WTC11 (cell line): ENCODE measurements at regions of chr2 and their contacts with region 1.

Region 1: DNA sequence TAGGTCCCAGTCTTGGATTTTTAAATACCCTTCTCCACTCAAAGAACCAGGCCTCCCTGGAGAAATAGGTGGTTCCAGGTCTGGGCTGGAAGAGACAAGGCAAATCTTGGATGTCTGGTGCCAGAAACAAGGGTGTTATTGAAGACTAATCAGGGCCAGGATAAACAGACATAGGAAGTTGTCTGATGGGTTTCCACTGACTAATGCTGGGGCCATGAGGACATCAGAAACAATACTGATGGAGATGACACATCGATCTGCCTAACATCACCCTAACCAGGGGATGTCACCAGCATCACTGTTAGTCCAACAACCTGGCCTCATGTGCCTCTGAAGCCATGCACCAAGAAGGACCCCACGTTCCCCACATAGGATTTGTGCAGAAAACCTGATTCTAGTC is 42.5 kb upstream of the GLI2 start:
- DNase-seq: no peak
- ATAC-seq: no peak
- H3K4me3 Mint-ChIP-seq: no peak overlapping the region
- H3K27ac Mint-ChIP-seq: no peak overlapping the region
- H3K4me1 Mint-ChIP-seq: peaks cover 20% of the 10 kb centered on the region
- H3K27me3 Mint-ChIP-seq: peaks cover 61% of the 10 kb centered on the region
- CTCF ChIP-seq: no peak

Region 2: GRCh38 chr2:120661551-120661950 is 31.6 kb before region 1 on chr2:
- CTCF ChIA-PET with region 1: no interaction called
- POLR2A ChIA-PET with region 1: no interaction called
- DNase-seq: peak; percentile 82
- ATAC-seq: peak; percentile 97
- H3K4me3 Mint-ChIP-seq: peak overlapping the region; percentile 32; the same call in 1 of the 2 replicates
- H3K27ac Mint-ChIP-seq: no peak overlapping the region
- H3K4me1 Mint-ChIP-seq: peaks cover 10% of the 10 kb centered on the region
- H3K27me3 Mint-ChIP-seq: peaks cover 74% of the 10 kb centered on the region
- CTCF ChIP-seq: no peak

Region 3: GRCh38 chr2:120740765-120741524 is 47.8 kb after region 1 on chr2:
- CTCF ChIA-PET with region 1: interaction called, 36 read pairs
- POLR2A ChIA-PET with region 1: no interaction called
- DNase-seq: peak; percentile 71
- ATAC-seq: peak; percentile 50
- H3K4me3 Mint-ChIP-seq: peak overlapping the region; percentile 65
- H3K27ac Mint-ChIP-seq: peak overlapping the region; percentile 97
- H3K4me1 Mint-ChIP-seq: peaks cover 68% of the 10 kb centered on the region
- H3K27me3 Mint-ChIP-seq: no peaks in the 10 kb centered on the region
- CTCF ChIP-seq: no peak

Region 4: GRCh38 chr2:120825370-120826259 is 132.5 kb after region 1 on chr2:
- CTCF ChIA-PET with region 1: interaction called, 10 read pairs
- POLR2A ChIA-PET with region 1: no interaction called
- DNase-seq: no peak
- ATAC-seq: peak; percentile 34
- H3K4me3 Mint-ChIP-seq: no peak overlapping the region; the same call in 1 of the 2 replicates
- H3K27ac Mint-ChIP-seq: peak overlapping the region; percentile 94
- H3K4me1 Mint-ChIP-seq: peaks cover 66% of the 10 kb centered on the region
- H3K27me3 Mint-ChIP-seq: no peaks in the 10 kb centered on the region
- CTCF ChIP-seq: no peak

Region 5: DNA sequence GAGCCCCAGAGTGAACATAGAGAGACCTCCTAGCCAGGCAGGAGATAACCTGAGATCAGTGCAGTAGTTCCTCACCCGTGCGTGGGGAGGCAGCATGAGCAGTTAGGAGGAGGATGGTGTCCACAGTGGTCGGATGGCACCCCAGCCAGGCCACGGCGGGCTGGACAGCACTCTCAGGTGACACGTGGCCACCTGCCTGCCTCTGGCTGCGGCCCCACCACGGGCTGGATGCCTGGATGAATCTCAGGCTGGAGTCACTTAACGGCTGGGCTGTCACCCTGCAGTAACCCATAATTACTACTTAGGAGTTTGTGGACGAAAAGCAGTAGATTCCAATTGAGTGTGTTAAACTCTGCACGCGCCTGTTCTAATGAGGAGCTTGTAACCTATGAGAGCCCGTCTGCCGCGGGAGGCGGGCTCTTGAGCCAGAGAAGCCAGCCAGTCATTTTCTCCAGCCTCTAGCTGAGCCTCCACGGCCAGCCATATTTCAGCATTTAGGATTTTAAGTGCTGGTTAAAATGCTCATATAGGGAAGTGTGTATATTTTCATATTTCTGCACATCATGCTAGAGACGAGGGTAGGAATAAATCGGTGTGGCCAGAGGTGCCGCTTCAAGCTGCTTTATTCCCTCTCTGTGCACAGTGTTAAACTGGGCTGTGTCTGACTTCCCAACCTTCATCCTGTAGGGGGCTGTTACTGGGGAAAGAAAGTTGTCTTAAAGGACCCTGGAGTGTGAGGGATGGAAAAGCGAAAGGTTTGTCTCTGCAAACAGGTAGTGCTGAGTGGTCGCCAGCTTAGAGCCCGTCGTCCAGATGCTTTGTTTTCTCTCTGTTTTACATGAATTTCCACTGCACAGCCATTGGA is 186.5 kb after region 1 on chr2:
- CTCF ChIA-PET with region 1: interaction called, 24 read pairs
- POLR2A ChIA-PET with region 1: no interaction called
- DNase-seq: no peak
- ATAC-seq: peak; percentile 54
- H3K4me3 Mint-ChIP-seq: no peak overlapping the region
- H3K27ac Mint-ChIP-seq: 0 out of 2 replicates have a peak overlapping the region, but pooled peaks have one; percentile 32
- H3K4me1 Mint-ChIP-seq: peaks cover 65% of the 10 kb centered on the region
- H3K27me3 Mint-ChIP-seq: 0 out of 2 replicates have a peak, but pooled peaks cover 2% of the 10 kb centered on the region
- CTCF ChIP-seq: no peak

Region 6: GRCh38 chr2:120958623-120959366 is 265.7 kb after region 1 on chr2:
- CTCF ChIA-PET with region 1: interaction called, 42 read pairs
- POLR2A ChIA-PET with region 1: no interaction called
- DNase-seq: peak; percentile 88
- ATAC-seq: peak; percentile 86
- H3K4me3 Mint-ChIP-seq: no peak overlapping the region
- H3K27ac Mint-ChIP-seq: peak overlapping the region; percentile 39; the same call in 1 of the 2 replicates
- H3K4me1 Mint-ChIP-seq: 0 out of 2 replicates have a peak, but pooled peaks cover 3% of the 10 kb centered on the region
- H3K27me3 Mint-ChIP-seq: no peaks in the 10 kb centered on the region
- CTCF ChIP-seq: peak; percentile 62